ENCODE measurements at regions of chr7 and their contacts with region 1.

Region 1: DNA sequence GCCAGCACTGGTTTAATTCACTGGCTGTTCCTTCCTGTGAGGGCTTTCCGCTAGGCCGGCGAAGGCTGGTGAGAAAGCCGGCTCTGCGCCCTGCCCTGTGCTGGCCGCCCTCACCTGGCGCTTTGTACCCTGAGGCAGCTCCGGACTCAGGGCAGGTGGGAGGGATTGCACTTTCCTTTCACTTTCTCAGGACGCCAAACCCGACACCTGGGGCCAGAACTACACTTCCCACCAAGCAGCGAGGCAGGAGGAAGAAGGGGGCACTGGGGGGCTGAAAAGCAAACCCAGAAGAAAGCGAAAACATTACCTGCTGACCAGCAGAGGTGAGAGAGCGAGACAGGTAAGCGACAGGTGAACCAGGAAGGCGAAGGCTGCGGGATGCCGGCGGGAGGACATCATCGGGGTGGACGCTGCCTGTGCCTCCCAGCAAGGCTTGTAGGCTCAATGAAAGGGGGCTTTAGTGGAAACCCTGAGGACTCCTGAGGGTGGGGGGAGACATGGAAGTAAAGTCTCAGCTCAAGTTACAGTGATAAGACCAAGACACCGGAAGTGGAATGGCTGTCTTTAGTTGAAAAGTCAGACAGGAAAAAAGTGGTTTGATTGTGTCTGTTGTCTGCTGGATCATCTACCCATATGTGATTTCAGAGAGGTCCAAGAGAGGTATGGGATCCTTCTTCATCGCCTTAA is at the start of gene RAB19:
- DNase-seq: peak; percentile 26
- H3K4me3 Mint-ChIP-seq: peak within 1 kb of the TSS; percentile 95
- H3K27ac Mint-ChIP-seq: peak within 1 kb of the TSS; percentile 90
- H3K4me1 Mint-ChIP-seq: peaks cover 49% of the 10 kb centered on the region
- H3K27me3 Mint-ChIP-seq: no peaks in the 10 kb centered on the region
- total RNA-seq, gene RAB19: 23.9 and 27.0 TPM in 2 replicates

Region 2: DNA sequence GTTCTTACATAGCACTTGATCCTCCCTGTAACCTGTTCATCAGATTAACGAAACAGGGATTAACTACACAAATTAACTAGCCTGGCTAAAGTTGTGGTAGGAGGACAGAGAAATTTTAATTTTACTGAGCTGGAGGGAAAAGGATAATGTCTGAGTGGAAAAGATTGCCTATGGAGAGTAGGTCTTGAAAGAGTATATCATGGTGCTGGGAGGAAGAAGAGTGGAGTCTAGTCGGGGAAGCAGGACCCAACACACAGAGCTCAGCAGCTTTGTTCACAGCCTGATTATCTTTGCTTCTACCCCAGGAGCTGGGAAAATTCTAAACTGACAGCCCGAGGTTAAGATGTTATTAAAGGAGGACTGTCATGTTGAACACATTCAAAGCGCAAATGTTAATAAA is 221.1 kb before region 1 on chr7:
- intact Hi-C with region 1: no loop called
- DNase-seq: no peak
- H3K4me3 Mint-ChIP-seq: no peak overlapping the region
- H3K27ac Mint-ChIP-seq: no peak overlapping the region
- H3K4me1 Mint-ChIP-seq: peaks cover 13% of the 10 kb centered on the region
- H3K27me3 Mint-ChIP-seq: peaks cover 45% of the 10 kb centered on the region

Region 3: GRCh38 chr7:140390466-140391190 is 13.4 kb before region 1 on chr7:
- intact Hi-C with region 1: loop called (anchors 1 kb)
- DNase-seq: no peak
- H3K4me3 Mint-ChIP-seq: no peak overlapping the region
- H3K27ac Mint-ChIP-seq: no peak overlapping the region
- H3K4me1 Mint-ChIP-seq: peaks cover 2% of the 10 kb centered on the region
- H3K27me3 Mint-ChIP-seq: no peaks in the 10 kb centered on the region

Region 4: GRCh38 chr7:140439359-140439758 is 35.3 kb after region 1 on chr7:
- intact Hi-C with region 1: loop called (anchors 1 kb)
- DNase-seq: no peak
- H3K4me3 Mint-ChIP-seq: no peak overlapping the region
- H3K27ac Mint-ChIP-seq: peak overlapping the region; percentile 58
- H3K4me1 Mint-ChIP-seq: peaks cover 13% of the 10 kb centered on the region
- H3K27me3 Mint-ChIP-seq: peaks cover 4% of the 10 kb centered on the region

Region 5: DNA sequence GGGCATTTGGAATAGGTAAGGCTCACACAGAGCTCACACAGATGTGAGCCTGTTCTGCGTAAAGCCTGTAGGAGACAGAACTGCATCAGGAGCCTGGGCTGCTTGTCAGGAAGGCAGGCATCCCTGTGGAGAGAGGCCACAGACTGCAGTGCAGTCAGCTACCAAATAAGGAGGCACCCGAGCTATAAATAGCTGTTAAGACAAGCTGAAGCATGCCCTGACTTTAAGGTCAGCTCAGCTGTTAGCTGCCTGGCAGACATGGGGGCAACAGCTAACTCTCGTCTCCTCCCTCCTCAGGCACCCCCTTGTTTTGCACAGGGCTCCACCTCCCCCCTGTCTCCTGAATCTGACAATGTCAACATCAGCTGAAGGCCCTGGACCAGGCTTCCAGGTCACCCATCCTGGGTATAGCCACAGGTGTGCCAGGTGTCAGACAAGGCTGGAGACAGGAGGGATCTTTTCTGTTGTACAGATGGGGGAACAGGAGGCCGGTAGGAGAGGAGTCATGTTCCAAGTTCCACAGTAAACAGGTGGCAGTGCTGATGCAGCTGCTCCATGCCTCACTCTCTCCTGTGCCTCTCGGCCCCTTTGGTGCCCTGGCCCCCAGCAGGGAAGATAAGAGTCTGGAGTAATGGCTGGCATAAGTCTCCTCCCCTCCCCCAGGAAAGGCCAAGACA is 102.9 kb after region 1 on chr7:
- intact Hi-C with region 1: no loop called
- DNase-seq: no peak
- H3K4me3 Mint-ChIP-seq: no peak overlapping the region
- H3K27ac Mint-ChIP-seq: no peak overlapping the region
- H3K4me1 Mint-ChIP-seq: no peaks in the 10 kb centered on the region
- H3K27me3 Mint-ChIP-seq: no peaks in the 10 kb centered on the region